Activated T-helper 1 cell treated with anti-CD3 and anti-CD28 coated beads, Interleukin-12 subunit alpha, Interleukin-12 subunit beta, Interleukin-2, Interleukin-4 antibody, amounts not matched to agents 30 ng/mL and 10 ng/mL and 1 ng/mL, durations not matched to agents 14 hours and 24 hours and 36 hours (primary cell): ENCODE measurements at regions of chr3 and their contacts with region 1.

Region 1: GRCh38 chr3:177787279-177788041 is 590.2 kb upstream of the TBL1XR1 start:
- DNase-seq: no peak
- H3K4me3 Mint-ChIP-seq: no peak overlapping the region
- H3K27ac Mint-ChIP-seq: peak overlapping the region; percentile 34
- H3K4me1 Mint-ChIP-seq: peaks cover 14% of the 10 kb centered on the region
- H3K27me3 Mint-ChIP-seq: no peaks in the 10 kb centered on the region

Region 2: DNA sequence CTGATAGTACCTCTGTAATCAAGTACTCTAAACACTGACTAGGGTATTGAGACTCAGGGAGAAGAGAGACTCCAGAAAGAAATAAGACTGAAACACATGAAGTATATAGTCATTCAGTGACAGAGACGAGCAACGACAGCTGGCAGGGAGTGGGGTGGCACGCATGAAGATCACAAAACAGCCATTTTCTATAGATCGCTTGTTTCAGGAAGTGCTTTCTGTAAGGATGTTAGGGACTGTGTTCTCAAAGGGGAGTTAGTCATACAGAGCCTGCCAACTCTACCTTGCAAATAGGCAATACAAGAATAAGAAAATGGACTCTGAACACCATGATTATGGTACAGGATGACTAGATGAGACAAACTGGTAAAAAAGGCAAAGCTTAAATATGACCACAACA is 729.7 kb before region 1 on chr3:
- intact Hi-C with region 1: loop called (anchors 2 kb)
- DNase-seq: peak; percentile 10
- H3K4me3 Mint-ChIP-seq: no peak overlapping the region
- H3K27ac Mint-ChIP-seq: no peak overlapping the region
- H3K4me1 Mint-ChIP-seq: peaks cover 7% of the 10 kb centered on the region
- H3K27me3 Mint-ChIP-seq: no peaks in the 10 kb centered on the region

Region 3: GRCh38 chr3:177337541-177338331 is 449.7 kb before region 1 on chr3:
- intact Hi-C with region 1: loop called (anchors 1 kb)
- DNase-seq: peak; percentile 66
- H3K4me3 Mint-ChIP-seq: peak overlapping the region; percentile 51
- H3K27ac Mint-ChIP-seq: peak overlapping the region; percentile 95
- H3K4me1 Mint-ChIP-seq: peaks cover 65% of the 10 kb centered on the region
- H3K27me3 Mint-ChIP-seq: peaks cover 8% of the 10 kb centered on the region

Region 4: GRCh38 chr3:177426878-177427495 is 360.5 kb before region 1 on chr3:
- intact Hi-C with region 1: loop called (anchors 1 kb)
- DNase-seq: peak; percentile 65
- H3K4me3 Mint-ChIP-seq: peak overlapping the region; percentile 20
- H3K27ac Mint-ChIP-seq: peak overlapping the region; percentile 59
- H3K4me1 Mint-ChIP-seq: peaks cover 29% of the 10 kb centered on the region
- H3K27me3 Mint-ChIP-seq: peaks cover 16% of the 10 kb centered on the region

Region 5: DNA sequence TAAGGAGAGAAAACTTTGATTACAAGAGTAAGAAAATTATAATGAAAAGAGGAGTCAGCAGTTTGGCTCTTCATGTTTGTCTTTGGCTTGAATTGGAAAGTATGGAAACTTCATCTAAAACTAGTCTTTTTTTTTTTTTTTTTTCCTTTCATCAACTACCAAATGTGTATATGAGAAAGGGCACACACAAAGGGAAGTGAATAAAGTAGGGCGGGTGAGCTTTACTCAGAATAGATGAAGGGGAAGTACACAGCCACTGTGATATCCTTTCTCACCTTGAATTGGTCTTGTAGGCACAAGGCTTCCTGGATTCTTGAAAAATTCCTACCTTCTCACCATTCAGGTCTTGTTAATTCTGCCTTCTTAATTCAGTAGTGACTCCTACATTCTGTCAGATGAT is 96.5 kb after region 1 on chr3:
- intact Hi-C with region 1: loop called (anchors 1 kb)
- DNase-seq: no peak
- H3K4me3 Mint-ChIP-seq: no peak overlapping the region
- H3K27ac Mint-ChIP-seq: no peak overlapping the region
- H3K4me1 Mint-ChIP-seq: peaks cover 20% of the 10 kb centered on the region
- H3K27me3 Mint-ChIP-seq: no peaks in the 10 kb centered on the region

Region 6: DNA sequence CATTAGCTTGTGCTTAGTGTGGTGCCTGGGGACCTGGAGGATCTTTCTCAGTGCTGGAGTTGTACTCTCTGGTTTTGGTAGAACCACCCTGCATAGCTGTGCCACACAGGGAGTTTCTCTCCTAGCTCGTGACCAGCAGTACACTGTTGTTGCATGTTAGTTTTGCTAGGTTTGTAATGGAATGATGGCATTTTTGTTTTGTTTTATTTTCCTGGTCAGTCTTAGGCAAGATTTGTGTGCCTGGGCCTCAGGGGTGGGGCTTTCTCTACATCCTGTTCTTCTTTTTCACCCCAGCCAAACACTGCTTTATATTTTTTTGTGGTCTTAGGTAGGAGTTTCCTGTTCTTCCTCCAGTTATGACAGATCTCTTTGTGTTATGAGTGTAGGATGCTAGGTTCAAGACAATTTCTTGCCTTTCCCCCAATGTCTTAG is 214.2 kb after region 1 on chr3:
- intact Hi-C with region 1: loop called (anchors 1 kb)
- DNase-seq: peak; percentile 21
- H3K4me3 Mint-ChIP-seq: peak overlapping the region; percentile 47
- H3K27ac Mint-ChIP-seq: peak overlapping the region; percentile 82
- H3K4me1 Mint-ChIP-seq: peaks cover 34% of the 10 kb centered on the region
- H3K27me3 Mint-ChIP-seq: no peaks in the 10 kb centered on the region